Endothelial cell of umbilical vein (primary cell): ENCODE measurements at regions of chr2 and their contacts with region 1.

Region 1: DNA sequence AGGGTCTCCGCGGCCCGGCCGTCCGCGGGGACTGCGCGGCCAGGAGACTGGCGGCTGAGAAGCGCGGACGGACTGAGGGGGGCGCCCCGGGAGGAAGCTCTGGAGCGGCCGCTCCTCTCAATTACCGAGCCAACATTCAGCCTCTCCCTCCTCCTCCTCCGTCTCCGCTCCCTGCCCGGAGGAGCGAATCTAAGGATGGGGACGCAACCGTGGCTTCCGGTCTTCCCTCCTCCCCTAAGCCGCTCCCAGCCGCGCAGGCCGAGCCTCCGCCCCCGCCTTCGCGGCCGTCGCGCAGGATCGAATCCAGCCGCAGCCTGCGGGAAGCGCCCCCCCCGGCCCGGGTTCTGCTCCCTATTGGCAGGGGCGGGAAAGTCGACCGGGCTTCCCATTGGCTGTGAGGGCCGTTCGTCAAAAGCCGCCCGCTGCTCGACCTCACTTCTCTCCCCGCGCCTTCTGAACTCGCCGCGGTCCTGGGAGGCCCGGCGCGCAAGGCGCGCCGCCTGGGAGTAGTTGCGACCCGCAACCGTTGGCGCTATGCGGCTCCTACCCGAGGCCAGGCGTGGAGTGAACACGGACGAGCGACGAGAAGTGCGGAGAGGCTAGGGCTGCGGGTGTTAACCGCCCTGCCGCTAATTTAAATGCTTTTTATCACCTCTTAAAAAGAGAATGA is at the start of gene HNRNPLL:
- DNase-seq: peak; percentile 98
- H3K4me3 ChIP-seq: peak within 1 kb of the TSS; percentile 95 to 99 (median 98)
- H3K27ac ChIP-seq: peak within 1 kb of the TSS; percentile 62
- H3K4me1 ChIP-seq: peaks cover 23% of the 10 kb centered on the region
- H3K27me3 ChIP-seq: no peaks in the 10 kb centered on the region
- CTCF ChIP-seq: no peak
- POLR2A ChIP-seq: peak; percentile 97
- total RNA-seq, gene HNRNPLL: 56.2 and 61.1 TPM in 2 replicates

Region 2: DNA sequence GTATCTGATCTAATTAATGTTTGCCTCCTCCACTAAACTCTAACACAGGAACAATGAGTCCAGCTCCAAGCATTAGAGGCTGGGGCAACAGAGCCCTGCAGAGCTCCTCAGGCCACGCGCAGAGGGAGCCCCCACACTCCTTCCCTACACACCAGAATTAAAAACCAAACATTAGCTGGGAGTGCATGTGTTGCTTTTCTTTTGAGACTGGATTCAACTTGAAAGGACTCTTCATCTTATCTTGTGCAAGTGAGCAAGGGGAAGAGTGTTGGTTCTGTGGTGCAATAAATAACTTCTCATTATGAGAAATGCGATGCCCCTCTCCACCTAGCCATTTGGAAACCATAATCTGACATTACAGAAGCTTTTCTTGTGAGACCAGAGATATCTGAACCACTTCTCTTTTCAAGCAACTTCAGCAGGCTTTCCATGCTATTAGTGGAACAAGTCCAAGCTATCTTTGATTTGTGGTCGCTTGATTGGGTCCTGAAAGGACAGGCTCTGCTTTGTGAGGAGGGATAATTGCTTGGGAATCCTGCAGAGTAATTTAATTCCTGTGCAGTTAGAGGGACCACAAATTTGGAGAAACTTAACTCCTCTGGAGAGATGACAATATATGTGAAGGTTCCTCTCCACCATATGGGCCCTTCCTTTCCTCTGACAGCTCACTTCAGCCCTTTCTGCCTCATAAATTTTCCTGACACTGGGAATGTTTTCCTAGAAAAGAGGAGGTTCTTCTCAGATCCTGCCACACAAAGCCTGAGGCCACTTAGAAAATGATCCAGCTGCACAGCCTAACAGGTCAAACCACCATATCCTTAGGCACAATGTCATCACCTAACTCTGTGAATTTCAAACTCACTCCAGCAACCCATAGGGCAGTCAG is 338.2 kb before region 1 on chr2:
- CTCF ChIA-PET with region 1: no interaction called
- POLR2A ChIA-PET with region 1: no interaction called
- dilution Hi-C with region 1: no loop called
- intact Hi-C with region 1: no loop called
- DNase-seq: no peak
- H3K4me3 ChIP-seq: no peak overlapping the region
- H3K27ac ChIP-seq: no peak overlapping the region
- H3K4me1 ChIP-seq: no peaks in the 10 kb centered on the region
- H3K27me3 ChIP-seq: peaks cover 0 to 2% of the 10 kb centered on the region in 2 experiments
- CTCF ChIP-seq: no peak
- POLR2A ChIP-seq: no peak

Region 3: GRCh38 chr2:38535744-38536506 is 66.9 kb before region 1 on chr2:
- CTCF ChIA-PET with region 1: interaction called, 8 read pairs
- POLR2A ChIA-PET with region 1: no interaction called
- dilution Hi-C with region 1: no loop called
- intact Hi-C with region 1: loop called (anchors 2 kb)
- DNase-seq: peak; percentile 75
- H3K4me3 ChIP-seq: peak overlapping the region; percentile 34 to 57 (median 52)
- H3K27ac ChIP-seq: no peak overlapping the region
- H3K4me1 ChIP-seq: no peaks in the 10 kb centered on the region
- H3K27me3 ChIP-seq: no peaks in the 10 kb centered on the region
- CTCF ChIP-seq: peak; percentile 94 to 96
- POLR2A ChIP-seq: no peak

Region 4: GRCh38 chr2:38590053-38590452 is 12.8 kb before region 1 on chr2:
- CTCF ChIA-PET with region 1: interaction called, 14 read pairs
- POLR2A ChIA-PET with region 1: no interaction called
- dilution Hi-C with region 1: no loop called
- intact Hi-C with region 1: no loop called
- DNase-seq: no peak
- H3K4me3 ChIP-seq: no peak overlapping the region
- H3K27ac ChIP-seq: no peak overlapping the region
- H3K4me1 ChIP-seq: peaks cover 5% of the 10 kb centered on the region
- H3K27me3 ChIP-seq: no peaks in the 10 kb centered on the region
- CTCF ChIP-seq: no peak
- POLR2A ChIP-seq: no peak

Region 5: DNA sequence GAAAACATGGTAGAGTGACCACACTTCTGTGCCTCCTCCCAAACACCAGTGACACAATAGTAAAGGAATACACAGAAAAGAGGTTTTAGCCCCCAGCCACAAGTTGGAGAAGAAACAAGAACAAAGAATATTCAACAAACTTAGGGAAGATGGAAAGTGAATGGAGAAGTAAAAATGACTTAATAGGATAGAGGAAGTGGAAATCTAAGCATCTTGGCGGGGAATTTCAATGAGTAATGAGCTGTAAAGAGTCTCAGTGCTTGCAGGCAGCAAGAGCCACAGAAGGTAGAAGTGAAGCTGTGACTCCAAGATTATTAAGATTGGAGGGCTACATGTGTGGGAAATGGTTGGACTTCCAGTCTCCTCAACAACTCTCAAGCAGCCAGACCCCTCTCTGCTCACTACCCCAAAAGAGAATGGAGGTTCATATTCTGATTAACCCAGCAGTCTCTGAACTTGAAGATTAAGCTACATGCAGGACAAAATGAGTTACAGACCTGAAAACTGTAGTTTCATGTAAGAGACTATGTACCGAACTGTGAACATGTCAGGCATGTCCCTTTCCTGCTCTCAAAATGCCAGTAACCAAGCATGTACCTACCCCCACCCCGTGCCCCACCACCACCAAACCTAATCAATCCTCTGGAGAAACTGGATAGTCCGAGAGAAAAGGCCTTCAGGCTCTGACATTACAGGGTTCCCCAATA is 16.7 kb after region 1 on chr2:
- CTCF ChIA-PET with region 1: interaction called, 15 read pairs
- POLR2A ChIA-PET with region 1: no interaction called
- dilution Hi-C with region 1: no loop called
- intact Hi-C with region 1: no loop called
- DNase-seq: peak; percentile 12
- H3K4me3 ChIP-seq: no peak overlapping the region
- H3K27ac ChIP-seq: no peak overlapping the region
- H3K4me1 ChIP-seq: no peaks in the 10 kb centered on the region
- H3K27me3 ChIP-seq: peaks cover 1 to 5% of the 10 kb centered on the region in 2 experiments
- CTCF ChIP-seq: no peak
- POLR2A ChIP-seq: no peak

Region 6: DNA sequence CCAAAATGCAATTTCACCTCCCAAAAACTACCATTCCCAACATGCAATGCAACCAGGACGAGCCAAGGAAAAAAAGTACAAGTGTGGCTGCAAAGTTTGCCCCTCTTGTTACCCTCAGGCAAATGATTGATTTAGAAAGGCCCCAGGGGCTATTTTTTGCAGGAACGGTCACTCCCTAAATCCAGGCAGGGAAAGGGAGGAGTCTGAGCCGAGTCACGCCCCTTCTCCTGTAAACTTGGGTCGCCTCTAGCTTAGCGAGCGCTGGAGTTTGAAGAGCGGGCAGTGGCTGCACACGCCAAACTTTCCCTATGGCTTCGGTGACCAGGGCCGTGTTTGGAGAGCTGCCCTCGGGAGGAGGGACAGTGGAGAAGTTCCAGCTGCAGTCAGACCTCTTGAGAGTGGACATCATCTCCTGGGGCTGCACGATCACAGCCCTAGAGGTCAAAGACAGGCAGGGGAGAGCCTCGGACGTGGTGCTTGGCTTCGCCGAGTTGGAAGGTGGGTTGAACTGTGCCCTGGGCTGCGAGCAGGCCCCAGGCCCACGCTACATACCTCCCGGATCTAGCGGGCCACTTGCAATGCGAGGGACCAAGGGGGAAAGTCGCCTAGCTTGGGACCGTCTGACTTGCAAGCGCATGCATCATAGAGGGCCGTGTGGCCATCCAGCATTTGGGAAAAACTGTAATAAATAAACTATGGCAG is 63.1 kb after region 1 on chr2 and contains the start of gene GALM:
- CTCF ChIA-PET with region 1: interaction called, 11 read pairs
- POLR2A ChIA-PET with region 1: interaction called, 3 read pairs
- dilution Hi-C with region 1: no loop called
- intact Hi-C with region 1: loop called (anchors 1 kb)
- DNase-seq: peak; percentile 92
- H3K4me3 ChIP-seq: peak within 1 kb of the TSS; percentile 8 to 46 (median 44)
- H3K27ac ChIP-seq: no peak within 1 kb of the TSS
- H3K4me1 ChIP-seq: peaks cover 3% of the 10 kb centered on the region
- H3K27me3 ChIP-seq: no peaks in the 10 kb centered on the region
- CTCF ChIP-seq: no peak
- POLR2A ChIP-seq: no peak
- total RNA-seq, gene GALM: 5.4 and 6.1 TPM in 2 replicates

Region 7: GRCh38 chr2:38690499-38691294 is 87.8 kb after region 1 on chr2:
- CTCF ChIA-PET with region 1: interaction called, 11 read pairs
- POLR2A ChIA-PET with region 1: no interaction called
- dilution Hi-C with region 1: no loop called
- intact Hi-C with region 1: loop called (anchors 1 kb)
- DNase-seq: peak; percentile 87
- H3K4me3 ChIP-seq: no peak overlapping the region
- H3K27ac ChIP-seq: peak overlapping the region; percentile 69
- H3K4me1 ChIP-seq: peaks cover 12% of the 10 kb centered on the region
- H3K27me3 ChIP-seq: no peaks in the 10 kb centered on the region
- CTCF ChIP-seq: no peak
- POLR2A ChIP-seq: no peak

Region 8: DNA sequence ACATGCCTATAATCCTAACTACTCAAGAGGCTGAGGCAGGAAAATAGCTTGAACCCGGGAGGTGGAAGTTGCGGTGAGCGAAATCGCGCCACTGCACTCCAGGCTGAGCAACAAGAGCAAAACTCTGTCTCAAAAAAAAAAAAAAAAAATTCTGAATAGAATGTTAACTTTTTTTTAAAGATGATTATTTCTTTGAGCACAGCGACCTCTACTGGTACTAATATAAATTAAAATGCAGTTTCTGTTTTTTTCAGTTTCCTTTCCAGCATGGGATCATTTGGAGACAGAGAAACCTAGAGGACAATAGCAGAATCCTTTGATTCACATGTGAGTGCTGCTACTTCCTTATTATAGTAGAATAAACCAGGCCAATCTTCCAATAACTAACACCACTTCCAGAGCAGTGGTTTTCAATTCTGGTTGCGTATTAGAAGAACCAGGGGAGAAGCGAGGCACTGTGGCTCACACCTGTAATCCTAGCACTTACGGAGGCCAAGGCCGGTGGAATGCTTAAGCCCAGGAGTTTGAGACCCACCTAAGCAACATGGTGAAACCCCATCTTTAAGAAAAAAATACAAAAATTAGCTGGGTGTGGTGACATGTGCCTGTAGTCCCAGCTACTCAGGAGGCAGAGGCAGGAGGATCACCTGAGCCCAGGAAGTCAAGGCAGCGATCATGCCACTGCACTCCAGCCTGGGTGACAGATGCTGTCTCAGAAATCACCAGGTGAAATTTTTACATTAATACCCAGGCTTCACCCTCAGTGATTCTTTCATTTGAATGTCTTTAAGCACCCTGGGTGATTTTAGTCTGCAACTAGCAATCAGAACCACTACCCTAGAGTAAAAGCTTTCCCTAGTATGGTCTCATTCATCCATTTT is 138.2 kb after region 1 on chr2:
- CTCF ChIA-PET with region 1: interaction called, 5 read pairs
- POLR2A ChIA-PET with region 1: interaction called, 3 read pairs
- dilution Hi-C with region 1: no loop called
- intact Hi-C with region 1: loop called (anchors 2 kb)
- DNase-seq: peak; percentile 62
- H3K4me3 ChIP-seq: no peak overlapping the region
- H3K27ac ChIP-seq: no peak overlapping the region
- H3K4me1 ChIP-seq: no peaks in the 10 kb centered on the region
- H3K27me3 ChIP-seq: no peaks in the 10 kb centered on the region
- CTCF ChIP-seq: peak; percentile 12 to 29
- POLR2A ChIP-seq: peak; percentile 13